HepG2 (cell line): ENCODE measurements at regions of chr5 and their contacts with region 1.

Region 1: DNA sequence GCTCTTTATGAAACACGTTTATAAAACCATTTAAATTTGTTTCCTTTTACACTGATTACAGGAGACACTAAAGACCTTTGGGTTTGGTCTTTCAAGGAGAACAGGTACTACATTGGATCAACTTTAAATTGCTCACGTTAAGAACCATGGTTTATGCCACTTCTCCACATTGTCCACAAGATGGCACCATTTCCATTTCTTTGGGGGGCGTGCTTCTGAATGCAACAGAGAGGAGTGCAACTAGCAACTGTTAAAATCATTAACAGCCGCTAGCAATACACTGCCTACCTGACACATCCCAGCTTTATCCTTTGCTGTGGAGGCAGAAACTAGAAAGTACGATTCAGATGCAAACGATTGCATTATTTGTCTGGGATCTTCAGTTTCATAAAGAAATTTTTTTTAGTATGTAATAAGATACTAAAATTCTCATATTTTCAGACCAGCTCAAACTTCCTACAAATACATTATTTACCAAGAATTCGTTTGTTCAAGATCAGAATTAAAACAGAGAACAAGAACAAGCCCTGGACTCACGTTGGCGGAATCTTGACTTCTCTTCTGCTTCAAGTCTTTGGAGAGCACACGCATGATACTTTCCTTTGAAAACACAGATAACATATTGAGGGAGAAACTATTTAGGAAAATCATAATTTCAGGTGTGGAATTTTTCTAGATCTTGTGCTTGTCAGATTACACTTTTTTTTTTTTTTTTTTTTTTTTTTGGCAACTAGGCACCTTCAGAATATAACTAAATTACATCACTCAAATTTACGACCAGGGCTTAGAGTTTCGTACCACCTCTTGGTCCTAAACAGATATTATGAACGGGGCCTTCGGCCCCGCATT is 702 bp downstream of the CDC20B start:
- DNase-seq: peak; percentile 80
- ATAC-seq: peak; percentile 61
- H3K4me3 ChIP-seq: peak overlapping the region; percentile 39 to 70 (median 59); a peak in 5 of 6 replicates
- H3K27ac ChIP-seq: no peak overlapping the region
- H3K4me1 ChIP-seq: peaks cover 39% of the 10 kb centered on the region
- H3K27me3 ChIP-seq: peaks cover 2 to 36% of the 10 kb centered on the region in 2 experiments; a peak in 3 of 5 replicates
- CTCF ChIP-seq: peak; percentile 88
- EP300 ChIP-seq: no peak
- POLR2A ChIP-seq: no peak
- RAD21 ChIP-seq: peak; percentile 66

Region 2: GRCh38 chr5:54517174-54518092 is 654.8 kb before region 1 on chr5 and contains the start of gene SNX18:
- CTCF ChIA-PET with region 1: no interaction called
- POLR2A ChIA-PET with region 1: no interaction called
- in situ Hi-C with region 1: loop called (anchors 25 kb)
- intact Hi-C with region 1: no loop called
- DNase-seq: peak; percentile 79
- ATAC-seq: peak; percentile 90
- H3K4me3 ChIP-seq: peak within 1 kb of the TSS; percentile 60 to 84 (median 82)
- H3K27ac ChIP-seq: peak within 1 kb of the TSS; percentile 66
- H3K4me1 ChIP-seq: peaks cover 41% of the 10 kb centered on the region
- H3K27me3 ChIP-seq: no peaks in the 10 kb centered on the region
- CTCF ChIP-seq: peak; percentile 92
- EP300 ChIP-seq: peak in 1 of 2 experiments; percentile 14; a peak in 1 of 4 replicates
- POLR2A ChIP-seq: peak; percentile 36 to 63; a peak in 3 of 4 replicates
- RAD21 ChIP-seq: peak; percentile 99
- total RNA-seq, gene SNX18: 6.0 and 6.2 TPM in 2 replicates

Region 3: GRCh38 chr5:55307383-55308253 is 135.3 kb after region 1 on chr5 and contains the starts of genes DHX29 and MTREX:
- CTCF ChIA-PET with region 1: no interaction called
- POLR2A ChIA-PET with region 1: no interaction called
- in situ Hi-C with region 1: no loop called
- intact Hi-C with region 1: loop called (anchors 1 kb)
- DNase-seq: peak; percentile 82
- ATAC-seq: peak; percentile 99
- H3K4me3 ChIP-seq: peak within 1 kb of the TSS; percentile 70 to 96 (median 92)
- H3K27ac ChIP-seq: peak within 1 kb of the TSS; percentile 94
- H3K4me1 ChIP-seq: peaks cover 70% of the 10 kb centered on the region
- H3K27me3 ChIP-seq: no peaks in the 10 kb centered on the region; a peak in 1 of 5 replicates
- CTCF ChIP-seq: no peak
- EP300 ChIP-seq: peak in 1 of 2 experiments; percentile 16; a peak in 1 of 4 replicates
- POLR2A ChIP-seq: peak; percentile 77 to 84
- RAD21 ChIP-seq: peak; percentile 17; the same call in 1 of the 2 replicates
- total RNA-seq, gene DHX29: 22.0 and 35.5 TPM in 2 replicates
- total RNA-seq, gene MTREX: 91.5 and 141 TPM in 2 replicates

Region 4: DNA sequence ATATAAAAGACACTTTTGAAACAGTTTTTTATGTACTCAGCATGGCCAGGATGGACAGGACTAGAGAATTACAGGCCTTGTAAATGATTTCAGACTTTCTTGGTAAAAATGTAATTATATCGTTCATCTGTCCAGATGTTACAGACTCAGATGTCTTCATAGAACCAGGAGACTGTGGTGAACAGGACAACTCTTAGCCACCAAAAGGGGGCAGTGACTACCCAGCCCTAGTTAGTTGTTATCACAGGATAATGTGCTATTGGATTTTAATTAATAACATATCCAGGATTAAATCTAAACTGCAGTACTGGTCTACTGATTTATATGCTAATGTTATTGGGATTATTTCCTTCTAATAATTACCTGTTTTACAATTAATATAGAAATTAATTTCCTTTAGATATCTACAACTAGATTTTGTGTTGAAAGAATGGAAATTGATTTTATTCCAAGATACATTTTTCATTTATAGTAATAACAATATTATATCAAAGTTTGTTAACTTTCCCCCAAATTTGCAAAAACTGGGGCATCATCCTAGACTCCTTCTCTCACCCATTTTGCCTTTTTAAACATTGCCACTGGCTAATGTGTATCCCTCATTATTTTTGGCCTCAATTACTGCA is 234.9 kb after region 1 on chr5:
- CTCF ChIA-PET with region 1: no interaction called
- POLR2A ChIA-PET with region 1: no interaction called
- in situ Hi-C with region 1: no loop called
- intact Hi-C with region 1: loop called (anchors 10 kb)
- DNase-seq: peak; percentile 27
- ATAC-seq: peak; percentile 80
- H3K4me3 ChIP-seq: no peak overlapping the region
- H3K27ac ChIP-seq: no peak overlapping the region
- H3K4me1 ChIP-seq: no peaks in the 10 kb centered on the region
- H3K27me3 ChIP-seq: no peaks in the 10 kb centered on the region
- CTCF ChIP-seq: peak; percentile 60
- EP300 ChIP-seq: no peak
- POLR2A ChIP-seq: no peak
- RAD21 ChIP-seq: peak; percentile 24; the same call in 1 of the 2 replicates

Region 5: DNA sequence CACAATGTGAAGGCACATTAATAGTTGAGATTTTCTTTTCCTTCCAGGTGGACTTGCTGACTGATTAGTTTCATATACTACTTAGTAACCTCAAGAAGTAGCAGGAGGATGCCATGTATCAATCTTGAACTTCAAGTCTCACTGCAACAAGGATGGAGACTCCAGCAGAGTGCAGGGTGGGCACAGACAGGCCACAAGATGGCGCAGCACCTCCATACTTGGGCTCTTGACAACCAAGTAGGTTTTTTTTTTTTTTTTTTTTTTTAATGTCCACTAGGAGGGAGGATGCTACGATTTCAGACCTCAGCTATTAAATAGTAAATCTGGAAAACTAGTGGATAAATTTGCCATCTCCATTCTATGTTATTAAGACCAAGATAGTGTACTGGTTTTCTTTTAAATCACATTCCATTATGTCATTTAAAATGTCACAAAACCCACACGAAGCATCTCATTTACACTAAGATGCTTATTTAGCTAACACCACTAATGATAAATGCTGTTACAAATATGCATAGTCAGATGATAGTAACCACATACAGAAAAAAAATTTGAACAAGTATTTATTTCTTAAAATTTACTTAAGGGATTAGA is 763.9 kb after region 1 on chr5:
- CTCF ChIA-PET with region 1: no interaction called
- POLR2A ChIA-PET with region 1: no interaction called
- in situ Hi-C with region 1: no loop called
- intact Hi-C with region 1: loop called (anchors 10 kb)
- DNase-seq: peak; percentile 65
- ATAC-seq: peak; percentile 12
- H3K4me3 ChIP-seq: no peak overlapping the region
- H3K27ac ChIP-seq: no peak overlapping the region
- H3K4me1 ChIP-seq: peaks cover 49% of the 10 kb centered on the region
- H3K27me3 ChIP-seq: no peaks in the 10 kb centered on the region
- CTCF ChIP-seq: peak; percentile 85
- EP300 ChIP-seq: no peak
- POLR2A ChIP-seq: no peak
- RAD21 ChIP-seq: peak; percentile 65